AG04449 (cell line): ENCODE measurements at regions of chr16 and their contacts with region 1.

Region 1: GRCh38 chr16:15822957-15823356 is 33.9 kb downstream of the MYH11 start:
- DNase-seq: no peak
- H3K4me3 ChIP-seq: no peak overlapping the region
- CTCF ChIP-seq: no peak

Region 2: DNA sequence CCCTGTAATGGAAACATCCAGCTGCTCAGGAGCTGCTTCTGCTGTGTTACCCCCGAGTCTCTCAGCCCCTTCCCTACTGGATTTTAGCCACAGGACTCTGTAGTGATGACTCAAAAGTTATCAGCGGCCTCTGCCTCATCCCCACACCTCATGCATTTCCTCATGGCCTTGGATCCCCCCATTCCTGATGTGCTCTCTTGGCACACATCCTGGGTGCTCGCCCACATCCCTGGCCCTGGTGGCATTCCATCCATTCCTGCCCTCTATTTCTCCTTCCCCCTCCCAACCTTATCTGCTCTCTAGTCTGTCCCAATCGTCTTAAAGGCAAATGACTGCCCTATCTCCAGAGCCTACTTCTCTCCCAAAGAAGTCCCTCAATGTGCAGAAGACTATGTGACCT is 204.6 kb before region 1 on chr16:
- CTCF ChIA-PET with region 1: no interaction called
- POLR2A ChIA-PET with region 1: no interaction called
- DNase-seq: peak; percentile 38
- H3K4me3 ChIP-seq: no peak overlapping the region
- CTCF ChIP-seq: no peak

Region 3: GRCh38 chr16:15765880-15766279 is 57.1 kb before region 1 on chr16:
- CTCF ChIA-PET with region 1: interaction called, 65 read pairs
- POLR2A ChIA-PET with region 1: no interaction called
- DNase-seq: no peak
- H3K4me3 ChIP-seq: no peak overlapping the region
- CTCF ChIP-seq: peak; percentile 77

Region 4: DNA sequence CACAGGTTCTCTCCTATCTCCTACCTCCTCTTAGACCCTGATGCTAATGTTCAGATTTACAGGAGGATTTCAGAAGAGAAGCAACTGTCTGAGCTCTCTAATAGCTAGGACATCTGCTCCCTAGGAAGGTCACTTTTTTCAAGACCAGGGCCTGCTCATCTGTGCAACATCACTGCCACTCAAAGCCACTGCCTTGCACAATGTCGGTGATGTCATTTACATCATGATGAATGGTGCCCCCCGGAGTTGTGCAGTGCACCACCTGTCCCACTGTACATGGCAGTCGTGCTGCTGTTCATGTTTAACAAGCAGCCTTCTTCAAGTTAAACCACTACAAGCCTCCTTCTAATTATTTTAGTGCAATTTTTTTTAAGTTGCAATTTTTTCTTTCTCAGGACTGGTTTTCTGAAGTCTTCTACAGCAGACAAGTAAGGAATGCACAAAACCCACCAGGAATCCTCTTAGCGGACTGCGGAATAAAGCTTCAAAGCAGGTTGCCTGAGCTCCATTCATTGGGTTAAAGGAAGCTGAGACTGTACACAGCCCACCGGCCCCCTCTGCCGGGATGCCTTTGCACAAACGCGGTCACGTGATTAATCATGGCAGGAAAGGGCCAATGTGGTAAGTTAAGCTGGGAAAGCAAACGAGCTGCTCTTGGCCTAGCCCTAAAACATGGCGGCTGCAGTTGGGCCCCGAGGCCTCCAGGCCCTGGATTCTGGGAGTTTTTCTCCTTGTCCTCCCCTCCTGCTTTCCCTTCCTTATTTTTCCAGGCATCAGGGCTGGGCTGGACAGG is 40.2 kb before region 1 on chr16:
- CTCF ChIA-PET with region 1: interaction called, 35 read pairs
- POLR2A ChIA-PET with region 1: no interaction called
- DNase-seq: no peak
- H3K4me3 ChIP-seq: no peak overlapping the region
- CTCF ChIP-seq: no peak

Region 5: GRCh38 chr16:15811481-15812400 is 11.2 kb before region 1 on chr16:
- CTCF ChIA-PET with region 1: interaction called, 79 read pairs
- POLR2A ChIA-PET with region 1: no interaction called
- DNase-seq: peak; percentile 86
- H3K4me3 ChIP-seq: no peak overlapping the region
- CTCF ChIP-seq: no peak

Region 6: GRCh38 chr16:15843635-15844279 is 20.8 kb after region 1 on chr16:
- CTCF ChIA-PET with region 1: interaction called, 27 read pairs
- POLR2A ChIA-PET with region 1: no interaction called
- DNase-seq: no peak
- H3K4me3 ChIP-seq: no peak overlapping the region
- CTCF ChIP-seq: no peak